IMR-90 (cell line): ENCODE measurements at regions of chr2 and their contacts with region 1.

Region 1: GRCh38 chr2:231130657-231131056 is 5.8 kb upstream of the HTR2B start:
- DNase-seq: no peak
- ATAC-seq: no peak; the same call in 1 of the 2 replicates
- H3K4me3 ChIP-seq: no peak overlapping the region
- H3K27ac ChIP-seq: peak overlapping the region; percentile 95
- H3K4me1 ChIP-seq: peaks cover 23% of the 10 kb centered on the region
- H3K27me3 ChIP-seq: no peaks in the 10 kb centered on the region
- CTCF ChIP-seq: no peak
- POLR2A ChIP-seq: no peak
- RAD21 ChIP-seq: no peak

Region 2: DNA sequence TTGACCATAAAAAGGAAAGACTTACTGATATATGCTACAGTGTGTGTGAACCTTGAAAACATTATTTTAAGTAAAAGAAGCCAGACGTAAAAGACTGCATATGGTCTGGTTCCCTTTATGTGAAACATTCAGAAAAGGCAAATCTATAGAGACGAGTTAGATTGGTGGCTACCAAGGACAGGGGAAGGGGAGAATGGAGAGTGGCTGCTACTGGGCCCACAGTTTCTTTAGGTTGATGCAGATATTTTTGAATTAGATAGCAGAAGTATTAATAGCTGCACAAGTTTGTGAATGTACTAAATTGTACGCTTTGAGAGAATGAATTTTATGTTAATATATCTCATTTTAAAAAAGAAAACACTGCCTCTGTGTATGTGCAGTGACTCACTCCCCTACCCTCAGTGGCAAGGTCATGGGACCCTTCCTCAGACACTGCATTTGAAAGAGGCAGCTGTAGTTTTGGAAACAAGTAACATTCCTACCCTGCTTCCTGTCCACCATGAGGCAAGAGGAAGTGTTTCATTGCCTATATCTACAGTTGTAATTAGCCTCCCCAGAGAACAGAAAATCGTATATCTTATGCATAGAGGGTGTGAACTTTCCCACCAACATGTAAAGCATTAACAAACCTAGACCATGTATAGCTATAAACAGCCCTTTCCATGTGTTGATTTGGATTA is 37.9 kb after region 1 on chr2:
- CTCF ChIA-PET with region 1: no interaction called
- POLR2A ChIA-PET with region 1: no interaction called
- dilution Hi-C with region 1: no loop called
- in situ Hi-C with region 1: no loop called
- intact Hi-C with region 1: loop called (anchors 2 kb)
- DNase-seq: no peak
- ATAC-seq: no peak
- H3K4me3 ChIP-seq: no peak overlapping the region
- H3K27ac ChIP-seq: peak overlapping the region; percentile 72; the same call in 1 of the 2 replicates
- H3K4me1 ChIP-seq: peaks cover 6% of the 10 kb centered on the region
- H3K27me3 ChIP-seq: no peaks in the 10 kb centered on the region
- CTCF ChIP-seq: no peak
- POLR2A ChIP-seq: no peak
- RAD21 ChIP-seq: no peak

Region 3: DNA sequence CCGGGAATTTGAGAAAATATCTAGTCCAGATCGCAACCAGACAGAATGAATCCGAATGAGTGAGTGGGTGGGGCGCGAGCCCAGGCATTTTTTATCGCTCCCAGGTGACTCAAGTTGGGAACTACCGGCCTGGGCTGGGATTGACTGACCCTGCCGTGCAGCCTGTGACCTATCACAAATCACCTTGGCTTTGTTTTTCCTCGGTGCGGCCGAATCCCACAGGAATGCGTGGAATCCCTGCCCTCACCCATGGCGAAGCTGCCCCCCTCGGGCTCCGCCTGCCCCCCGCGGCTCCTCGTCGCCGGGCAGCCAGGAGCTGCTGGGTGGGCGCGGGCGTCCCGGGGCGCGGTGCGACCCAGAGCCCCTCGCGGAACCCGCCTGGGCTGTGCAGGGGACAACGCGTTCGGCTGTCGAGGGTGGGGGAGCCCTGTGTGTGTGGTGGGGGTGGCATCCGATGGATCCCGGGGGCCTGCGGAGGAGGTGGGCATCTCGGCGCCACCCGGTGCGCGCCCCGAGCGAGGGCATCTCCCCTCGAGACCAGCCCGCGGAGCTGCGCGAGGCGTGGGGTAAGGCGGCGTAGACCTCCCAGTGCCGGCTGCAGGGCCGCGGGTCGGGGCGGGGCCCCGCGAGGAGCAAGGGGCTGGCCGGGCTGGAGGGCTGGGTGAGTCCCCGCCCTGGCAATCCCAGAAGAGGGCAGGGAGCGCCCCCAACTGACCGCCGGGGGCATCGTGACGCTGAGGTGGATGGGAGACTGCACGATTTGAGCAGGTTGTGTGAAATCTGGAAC is 281.4 kb after region 1 on chr2:
- CTCF ChIA-PET with region 1: no interaction called
- POLR2A ChIA-PET with region 1: no interaction called
- dilution Hi-C with region 1: no loop called
- in situ Hi-C with region 1: no loop called
- intact Hi-C with region 1: no loop called
- DNase-seq: peak; percentile 71
- ATAC-seq: peak; percentile 100
- H3K4me3 ChIP-seq: peak overlapping the region; percentile 63
- H3K27ac ChIP-seq: peak overlapping the region; percentile 42
- H3K4me1 ChIP-seq: 0 out of 2 replicates have a peak, but pooled peaks cover 3% of the 10 kb centered on the region
- H3K27me3 ChIP-seq: no peaks in the 10 kb centered on the region
- CTCF ChIP-seq: peak; percentile 98
- POLR2A ChIP-seq: no peak
- RAD21 ChIP-seq: peak; percentile 93